ENCODE measurements at regions of chr11 and their contacts with region 1.

Region 1: GRCh38 chr11:82900277-82901164 is at the start of gene PRCP:
- DNase-seq: peak; percentile 78 to 89
- H3K4me3 ChIP-seq: peak within 1 kb of the TSS; percentile 79 to 97 (median 87)
- H3K27ac ChIP-seq: peak within 1 kb of the TSS; percentile 46; the same call in 1 of the 2 replicates
- H3K4me1 ChIP-seq: peaks cover 0 to 7% (median 5%) of the 10 kb centered on the region in 4 experiments; a peak in 5 of 7 replicates
- H3K27me3 ChIP-seq: no peaks in the 10 kb centered on the region
- CTCF ChIP-seq: peak in 1 of 3 experiments; percentile 4; a peak in 2 of 4 replicates
- EP300 ChIP-seq: 0 out of 3 replicates have a peak, but pooled peaks of 1 of the 2 experiments have one; percentile 18
- POLR2A ChIP-seq: peak; percentile 35 to 96
- RAD21 ChIP-seq: no peak
- total RNA-seq, gene PRCP: 62.6 and 63.8 TPM in 2 replicates

Region 2: DNA sequence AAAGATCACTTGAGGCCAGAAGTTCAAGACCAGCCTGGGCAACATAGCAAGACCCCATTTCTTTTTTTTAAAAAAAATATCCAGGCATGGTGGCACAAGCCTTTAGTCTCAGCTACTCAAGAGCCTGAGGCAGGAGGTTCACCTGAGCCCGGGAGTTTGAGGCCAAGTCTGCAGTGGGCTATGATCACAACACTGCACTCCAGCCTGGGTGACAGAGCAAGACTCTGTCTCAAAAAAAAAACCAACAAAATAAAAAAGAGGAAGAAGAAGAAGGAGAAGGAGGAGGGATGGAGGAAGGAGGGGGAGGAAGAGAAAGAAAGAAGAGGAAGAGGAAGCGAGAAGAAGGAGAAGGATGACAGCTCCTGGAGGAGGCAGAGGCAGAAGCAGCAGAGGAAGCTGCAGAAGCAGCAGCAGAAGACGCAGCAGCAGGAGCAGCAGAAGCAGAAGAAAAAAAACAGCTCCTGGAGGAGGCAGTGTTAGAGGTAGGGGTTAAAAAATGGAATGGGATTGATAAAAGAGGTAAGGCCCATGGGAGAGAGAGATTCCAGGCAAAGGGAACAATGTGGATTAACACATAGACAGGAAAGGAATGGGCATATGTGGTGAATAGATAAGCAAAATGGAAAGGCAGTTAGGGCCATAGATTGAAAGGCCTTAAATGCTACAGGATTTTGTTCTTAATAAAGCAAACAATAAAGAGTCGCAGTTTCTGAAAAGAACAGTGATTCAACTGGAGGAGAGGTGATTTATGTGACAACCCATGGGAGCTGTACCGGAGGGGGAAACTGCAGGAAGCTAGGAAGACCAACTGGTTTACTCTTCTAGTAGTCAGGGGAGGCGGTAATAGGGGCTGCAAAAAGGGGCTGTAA is 11.2 kb before region 1 on chr11:
- CTCF ChIA-PET with region 1: interaction called, 7 read pairs
- POLR2A ChIA-PET with region 1: interaction called, 13 read pairs
- DNase-seq: no peak
- H3K4me3 ChIP-seq: no peak overlapping the region
- H3K27ac ChIP-seq: no peak overlapping the region
- H3K4me1 ChIP-seq: no peaks in the 10 kb centered on the region
- H3K27me3 ChIP-seq: no peaks in the 10 kb centered on the region
- CTCF ChIP-seq: no peak
- EP300 ChIP-seq: no peak
- POLR2A ChIP-seq: no peak
- RAD21 ChIP-seq: no peak

Region 3: DNA sequence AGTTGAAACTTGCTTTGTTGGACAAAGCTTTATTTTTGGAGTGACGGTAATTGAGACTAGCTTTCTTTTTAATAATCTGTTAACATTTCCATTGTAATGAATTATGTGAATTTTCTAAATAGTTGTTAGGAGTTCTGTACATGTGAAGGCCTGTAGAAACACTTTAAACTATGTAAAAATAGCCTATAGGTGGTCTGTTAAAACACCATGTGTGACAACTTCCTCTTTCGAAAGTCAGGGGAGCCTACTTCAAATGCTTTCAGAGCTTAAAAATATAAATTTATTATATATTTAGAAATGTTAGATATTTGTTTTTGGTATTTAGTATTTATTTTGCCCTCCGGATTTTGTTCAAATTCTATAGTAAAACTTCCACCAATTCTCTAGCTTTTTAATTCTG is 29.7 kb after region 1 on chr11:
- CTCF ChIA-PET with region 1: no interaction called
- POLR2A ChIA-PET with region 1: no interaction called
- DNase-seq: no peak
- H3K4me3 ChIP-seq: no peak overlapping the region
- H3K27ac ChIP-seq: no peak overlapping the region
- H3K4me1 ChIP-seq: no peaks in the 10 kb centered on the region
- H3K27me3 ChIP-seq: no peaks in the 10 kb centered on the region
- CTCF ChIP-seq: no peak
- EP300 ChIP-seq: no peak
- POLR2A ChIP-seq: no peak
- RAD21 ChIP-seq: no peak

Region 4: GRCh38 chr11:83464160-83464944 is 563.8 kb after region 1 on chr11:
- CTCF ChIA-PET with region 1: no interaction called
- POLR2A ChIA-PET with region 1: no interaction called
- DNase-seq: no peak
- H3K4me3 ChIP-seq: no peak overlapping the region
- H3K27ac ChIP-seq: no peak overlapping the region
- H3K4me1 ChIP-seq: no peaks in the 10 kb centered on the region
- H3K27me3 ChIP-seq: no peaks in the 10 kb centered on the region
- CTCF ChIP-seq: no peak
- EP300 ChIP-seq: no peak
- POLR2A ChIP-seq: no peak
- RAD21 ChIP-seq: no peak